ENCODE measurements at regions of chr7 and their contacts with region 1.

Region 1: DNA sequence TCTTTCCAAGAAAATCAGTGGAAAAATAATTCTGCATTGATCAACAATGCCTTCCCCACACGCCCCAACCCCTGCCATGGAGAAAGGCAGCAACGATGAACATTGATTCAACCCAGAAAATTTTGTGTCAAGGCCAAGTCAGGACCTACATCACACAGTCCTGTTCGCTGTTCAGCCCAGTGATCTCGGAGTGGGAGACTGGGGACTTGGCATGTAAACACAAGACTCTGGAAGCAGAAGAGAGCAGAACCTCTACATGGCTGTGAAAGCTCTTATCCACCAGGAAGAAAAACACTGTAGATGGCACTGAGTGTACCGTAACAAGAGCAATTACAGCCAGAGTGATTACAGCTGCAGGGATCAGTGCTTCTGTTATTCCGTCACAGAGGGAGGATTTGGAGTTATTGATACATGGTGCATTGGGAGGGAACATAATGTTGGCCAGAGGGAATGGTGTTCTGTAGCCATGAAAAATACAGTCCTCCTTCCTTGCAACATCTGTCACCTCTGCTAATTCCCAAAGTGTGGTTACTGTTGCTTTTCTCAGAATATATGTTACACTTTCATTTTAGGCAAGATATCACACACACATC is 136.6 kb downstream of the IQUB start:
- DNase-seq: no peak
- H3K4me3 ChIP-seq: no peak overlapping the region
- H3K27ac ChIP-seq: no peak overlapping the region
- H3K4me1 ChIP-seq: no peaks in the 10 kb centered on the region
- H3K27me3 ChIP-seq: no peaks in the 10 kb centered on the region
- CTCF ChIP-seq: no peak
- EP300 ChIP-seq: no peak
- POLR2A ChIP-seq: no peak

Region 2: GRCh38 chr7:122652876-122653275 is 745.0 kb before region 1 on chr7:
- in situ Hi-C with region 1: no loop called
- intact Hi-C with region 1: loop called (anchors 10 kb)
- DNase-seq: no peak
- H3K4me3 ChIP-seq: no peak overlapping the region
- H3K27ac ChIP-seq: no peak overlapping the region
- H3K4me1 ChIP-seq: no peaks in the 10 kb centered on the region
- H3K27me3 ChIP-seq: no peaks in the 10 kb centered on the region
- CTCF ChIP-seq: no peak
- EP300 ChIP-seq: no peak
- POLR2A ChIP-seq: no peak

Region 3: DNA sequence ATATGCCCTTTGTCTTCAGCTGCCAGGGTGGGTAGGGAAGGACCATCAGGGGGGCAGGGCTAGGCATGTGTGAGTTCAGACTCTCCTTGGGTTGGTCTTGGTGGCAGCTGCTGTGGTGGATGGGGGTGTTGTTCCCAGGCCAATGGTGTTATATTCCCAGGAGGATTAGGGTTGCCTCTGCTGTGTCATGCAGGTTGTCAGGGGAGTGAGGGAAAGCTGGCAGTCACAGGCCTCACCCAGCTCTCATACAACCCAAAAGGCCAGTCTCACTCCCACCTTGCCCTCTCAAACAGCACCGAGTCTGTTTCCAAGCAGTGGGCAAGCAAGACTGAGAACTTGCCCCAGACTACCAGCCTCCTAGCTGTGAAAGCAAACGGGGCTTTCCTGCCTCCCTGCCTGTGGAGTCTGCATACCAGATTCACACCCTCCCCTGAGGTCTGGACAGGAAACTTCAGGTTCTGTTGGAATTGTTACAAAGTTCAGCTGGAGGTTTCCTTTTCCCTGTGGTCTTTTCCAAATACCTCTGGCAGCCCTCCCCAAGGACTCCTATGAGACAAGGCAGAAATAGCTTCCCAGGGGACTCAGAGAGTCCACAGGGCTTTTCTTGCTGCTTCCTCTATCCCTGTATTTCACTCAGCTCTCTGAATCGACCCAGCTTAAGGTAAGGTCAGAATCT is 448.5 kb after region 1 on chr7:
- in situ Hi-C with region 1: no loop called
- intact Hi-C with region 1: no loop called
- DNase-seq: no peak
- H3K4me3 ChIP-seq: no peak overlapping the region
- H3K27ac ChIP-seq: no peak overlapping the region
- H3K4me1 ChIP-seq: peaks cover 0 to 5% (median 0%) of the 10 kb centered on the region in 4 donors
- H3K27me3 ChIP-seq: no peaks in the 10 kb centered on the region
- CTCF ChIP-seq: no peak
- EP300 ChIP-seq: no peak
- POLR2A ChIP-seq: no peak